Dorsolateral prefrontal cortex (tissue), 120 donors: ENCODE measurements at regions of chr1 and their contacts with region 1.

Region 1: DNA sequence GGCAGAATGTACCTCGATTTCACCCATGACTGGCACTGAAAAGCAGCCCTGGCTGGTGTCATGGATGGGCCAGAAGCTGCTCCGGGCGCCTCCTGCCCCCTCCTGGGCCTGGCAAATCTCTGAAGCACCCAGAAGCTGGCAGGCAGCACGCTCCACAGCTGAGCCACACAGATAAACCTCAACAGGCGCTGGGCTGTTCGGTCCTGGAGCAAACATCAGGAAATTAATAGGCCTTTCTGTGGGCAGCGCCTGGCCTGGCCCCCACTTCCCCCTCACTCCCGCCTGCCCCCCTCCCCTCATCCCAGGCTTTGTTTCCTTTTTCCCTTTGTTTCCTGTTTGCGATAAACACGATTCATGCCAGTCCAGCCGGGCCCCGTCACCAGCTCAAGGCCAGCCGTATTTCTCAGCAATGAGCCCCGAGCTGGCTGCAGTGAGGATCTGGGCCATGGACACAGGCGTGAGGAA is 20.1 kb upstream of the DISP3 start:
- DNase-seq: peak; percentile 21 to 93 (median 88)
- H3K4me3 ChIP-seq: peak overlapping the region in 3 of 59 donors; percentile 1 to 18 (median 2)
- H3K27ac ChIP-seq: peak overlapping the region; percentile 3 to 93 (median 84)
- H3K27me3 ChIP-seq: peaks cover 0 to 5% (median 0%) of the 10 kb centered on the region in 45 donors
- CTCF ChIP-seq: peak in 46 of 56 donors; percentile 16 to 63 (median 40)

Region 2: DNA sequence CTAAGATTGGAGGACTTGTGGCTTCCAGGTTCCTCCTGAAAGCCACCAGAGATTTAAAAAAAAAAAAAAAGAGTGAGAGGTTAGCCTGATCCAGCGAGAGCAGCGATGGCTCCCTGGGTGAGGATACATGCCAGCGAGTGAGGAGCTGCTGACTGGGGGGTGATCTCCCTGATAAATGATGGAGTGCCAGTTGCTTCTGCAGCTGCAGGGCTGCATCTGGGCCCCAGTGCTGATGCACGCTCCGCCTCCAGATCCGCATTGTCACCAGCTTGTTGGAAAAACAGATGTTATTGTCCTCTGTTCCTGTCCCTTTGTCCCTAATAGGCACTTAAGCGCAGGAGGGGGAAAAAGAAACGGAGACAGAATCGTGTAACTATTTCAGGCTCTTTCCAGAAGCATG is 157.2 kb before region 1 on chr1:
- intact Hi-C with region 1: loop called in 1 of 2 experiments (anchors 5 kb)
- DNase-seq: peak; percentile 9 to 87 (median 78)
- H3K4me3 ChIP-seq: peak overlapping the region in 9 of 59 donors; percentile 3 to 43 (median 17)
- H3K27ac ChIP-seq: peak overlapping the region in 31 of 59 donors; percentile 10 to 79 (median 46)
- H3K27me3 ChIP-seq: no peaks in the 10 kb centered on the region
- CTCF ChIP-seq: peak in 3 of 56 donors; percentile 13 to 21 (median 16)

Region 3: DNA sequence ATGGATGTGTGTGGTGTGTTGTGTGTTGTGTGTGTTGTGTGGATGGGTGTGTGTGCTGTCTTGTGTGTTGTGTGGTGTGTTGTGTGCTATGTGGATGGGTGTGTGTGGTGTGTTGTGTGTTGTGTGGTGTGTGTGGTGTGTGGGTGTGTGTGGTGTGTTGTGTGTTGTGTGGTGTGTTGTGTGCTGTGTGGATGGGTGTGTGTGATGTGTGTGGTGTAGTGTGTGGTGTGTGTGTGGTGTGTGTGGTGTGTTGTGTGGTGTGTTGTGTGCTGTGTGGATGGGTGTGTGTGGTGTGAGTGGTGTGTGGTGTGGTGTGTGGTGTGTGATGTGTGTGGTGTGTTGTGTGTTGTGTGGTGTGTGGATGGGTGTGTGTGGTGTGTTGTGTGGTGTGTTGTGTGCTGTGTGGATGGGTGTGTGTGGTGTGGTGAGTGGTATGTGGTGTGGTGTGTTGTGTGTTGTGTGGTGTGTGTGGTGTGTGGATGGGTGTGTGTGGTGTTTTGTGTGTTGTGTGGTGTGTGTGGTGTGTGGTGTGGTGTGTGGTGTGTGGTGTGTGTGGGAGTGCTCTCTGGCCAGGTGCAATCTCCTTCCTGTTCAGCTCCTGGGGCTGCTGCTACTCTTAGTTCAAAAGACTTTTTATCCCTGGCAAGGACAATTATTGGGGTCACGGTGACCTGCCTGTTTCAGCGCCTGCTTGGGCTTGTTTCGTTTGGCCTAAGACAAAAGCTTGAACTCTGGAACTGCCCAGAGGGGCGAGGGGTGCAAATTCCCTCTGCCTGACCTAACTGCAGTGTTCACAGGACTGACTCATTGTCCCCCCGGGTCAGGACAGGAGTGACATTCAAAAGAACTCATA is 84.7 kb before region 1 on chr1:
- intact Hi-C with region 1: no loop called
- DNase-seq: no peak
- H3K4me3 ChIP-seq: no peak overlapping the region
- H3K27ac ChIP-seq: no peak overlapping the region
- H3K27me3 ChIP-seq: no peaks in the 10 kb centered on the region
- CTCF ChIP-seq: no peak

Region 4: GRCh38 chr1:11654939-11655808 is 196.3 kb after region 1 on chr1:
- intact Hi-C with region 1: no loop called
- DNase-seq: no peak
- H3K4me3 ChIP-seq: peak overlapping the region; percentile 63 to 89 (median 79)
- H3K27ac ChIP-seq: peak overlapping the region in 49 of 59 donors; percentile 8 to 94 (median 70)
- H3K27me3 ChIP-seq: no peaks in the 10 kb centered on the region
- CTCF ChIP-seq: no peak